Lower lobe of right lung (tissue), 2 donors: ENCODE measurements at regions of chr7 and their contacts with region 1.

Region 1: DNA sequence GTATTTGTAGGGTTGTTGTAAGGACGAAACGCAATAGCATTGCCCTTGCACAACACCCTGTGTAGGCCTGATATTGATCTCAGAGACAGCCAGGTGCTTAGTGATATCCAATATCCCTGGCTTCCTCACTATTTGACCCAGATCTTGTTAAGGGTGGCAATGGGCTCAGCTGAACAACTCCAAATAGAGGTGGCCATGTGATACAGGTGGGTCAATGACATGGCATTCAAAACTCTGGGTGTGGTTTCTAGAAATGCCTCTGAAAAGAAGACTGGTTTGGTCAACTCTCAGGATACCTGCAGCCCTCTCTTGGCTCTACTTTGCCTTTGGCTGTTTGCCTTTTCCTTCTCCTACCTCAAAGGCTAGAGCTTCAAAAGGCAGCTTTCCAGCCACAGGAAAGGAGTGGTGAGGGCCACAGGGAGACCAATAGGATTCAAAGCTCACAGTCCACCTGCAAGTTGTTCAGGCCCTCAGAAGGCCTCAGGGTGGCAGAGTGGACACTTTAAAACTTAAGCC is 14.9 kb upstream of the GATAD1 start:
- DNase-seq: no peak
- ATAC-seq: no peak
- H3K4me3 ChIP-seq: no peak overlapping the region
- H3K27ac ChIP-seq: no peak overlapping the region
- H3K4me1 ChIP-seq: no peaks in the 10 kb centered on the region
- H3K27me3 ChIP-seq: no peaks in the 10 kb centered on the region
- CTCF ChIP-seq: no peak

Region 2: GRCh38 chr7:92057362-92057761 is 375.1 kb before region 1 on chr7:
- intact Hi-C with region 1: loop called (anchors 5 kb)
- DNase-seq: no peak
- ATAC-seq: peak; percentile 74 to 75
- H3K4me3 ChIP-seq: no peak overlapping the region
- H3K27ac ChIP-seq: peak overlapping the region; percentile 12
- H3K4me1 ChIP-seq: peaks cover 7% of the 10 kb centered on the region
- H3K27me3 ChIP-seq: no peaks in the 10 kb centered on the region
- CTCF ChIP-seq: no peak

Region 3: DNA sequence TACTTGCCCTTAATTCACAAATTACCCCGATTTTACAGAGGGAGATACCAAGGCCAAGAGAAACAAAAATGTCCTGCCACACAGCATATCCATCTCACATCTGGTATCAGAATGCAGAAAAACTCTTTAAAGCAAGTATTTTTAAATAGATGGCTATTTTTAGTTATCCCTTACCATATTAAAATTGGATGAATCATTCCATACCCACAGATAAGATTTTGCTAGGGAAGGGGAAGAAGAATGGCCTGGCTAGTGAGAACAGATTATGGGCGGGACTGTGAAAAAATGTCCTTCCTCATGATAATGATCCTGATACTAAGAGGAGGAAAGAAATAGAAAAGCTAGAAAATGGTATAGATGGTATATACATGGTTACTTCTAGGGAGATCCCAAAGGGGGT is 65.7 kb before region 1 on chr7:
- intact Hi-C with region 1: no loop called
- DNase-seq: no peak
- ATAC-seq: no peak
- H3K4me3 ChIP-seq: no peak overlapping the region
- H3K27ac ChIP-seq: no peak overlapping the region
- H3K4me1 ChIP-seq: no peaks in the 10 kb centered on the region
- H3K27me3 ChIP-seq: no peaks in the 10 kb centered on the region
- CTCF ChIP-seq: no peak